Brain microvascular endothelial cell (primary cell): ENCODE measurements at regions of chr2 and their contacts with region 1.

Region 1: GRCh38 chr2:85813982-85814801 is 60.4 kb downstream of the ATOH8 start:
- DNase-seq: peak; percentile 81
- H3K4me3 ChIP-seq: no peak overlapping the region
- H3K27ac ChIP-seq: no peak overlapping the region
- H3K27me3 ChIP-seq: peaks cover 3% of the 10 kb centered on the region
- CTCF ChIP-seq: peak; percentile 98

Region 2: GRCh38 chr2:85327822-85328617 is 486.2 kb before region 1 on chr2 and contains the start of gene TGOLN2:
- in situ Hi-C with region 1: no loop called
- DNase-seq: peak; percentile 83
- H3K4me3 ChIP-seq: peak within 1 kb of the TSS; percentile 85
- H3K27ac ChIP-seq: peak within 1 kb of the TSS; percentile 86
- H3K27me3 ChIP-seq: no peaks in the 10 kb centered on the region
- CTCF ChIP-seq: peak; percentile 12

Region 3: GRCh38 chr2:85707304-85707703 is 106.9 kb before region 1 on chr2:
- in situ Hi-C with region 1: loop called (anchors 25 kb)
- DNase-seq: peak; percentile 94
- H3K4me3 ChIP-seq: no peak overlapping the region
- H3K27ac ChIP-seq: no peak overlapping the region
- H3K27me3 ChIP-seq: no peaks in the 10 kb centered on the region
- CTCF ChIP-seq: peak; percentile 84

Region 4: GRCh38 chr2:85741833-85742455 is 72.2 kb before region 1 on chr2:
- in situ Hi-C with region 1: no loop called
- DNase-seq: peak; percentile 89
- H3K4me3 ChIP-seq: peak overlapping the region; percentile 20
- H3K27ac ChIP-seq: peak overlapping the region; percentile 90
- H3K27me3 ChIP-seq: no peaks in the 10 kb centered on the region
- CTCF ChIP-seq: peak; percentile 17